ENCODE measurements at regions of chr6 and their contacts with region 1.

Region 1: DNA sequence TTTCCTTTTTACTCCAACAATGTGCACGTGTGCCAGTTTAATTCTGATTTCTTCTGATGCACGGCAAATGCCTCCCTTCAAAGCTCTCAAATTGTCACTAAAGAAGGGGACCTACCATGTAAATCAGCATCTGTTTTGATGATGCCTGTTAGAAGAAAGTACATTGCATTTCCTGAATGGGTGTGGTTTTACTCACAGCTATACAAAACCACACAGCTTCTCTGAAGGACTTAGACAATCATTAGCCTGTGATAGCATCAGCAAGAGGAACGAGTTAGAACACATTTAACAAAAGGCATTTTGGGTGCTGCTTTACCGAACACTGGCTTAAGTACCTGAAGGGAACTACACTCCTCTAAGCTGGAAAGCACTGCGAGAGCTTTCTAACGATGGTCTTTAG is 109.4 kb downstream of the ATXN1 start:
- DNase-seq: no peak
- H3K4me3 ChIP-seq: no peak overlapping the region
- H3K4me3 Mint-ChIP-seq: no peak overlapping the region
- H3K27ac ChIP-seq: peak overlapping the region in 1 of 2 donors; percentile 26
- H3K27ac Mint-ChIP-seq: no peak overlapping the region
- H3K4me1 ChIP-seq: peaks cover 7 to 17% of the 10 kb centered on the region in 2 donors
- H3K4me1 Mint-ChIP-seq: peaks cover 20% of the 10 kb centered on the region
- H3K27me3 ChIP-seq: no peaks in the 10 kb centered on the region
- H3K27me3 Mint-ChIP-seq: no peaks in the 10 kb centered on the region
- CTCF ChIP-seq: no peak

Region 2: DNA sequence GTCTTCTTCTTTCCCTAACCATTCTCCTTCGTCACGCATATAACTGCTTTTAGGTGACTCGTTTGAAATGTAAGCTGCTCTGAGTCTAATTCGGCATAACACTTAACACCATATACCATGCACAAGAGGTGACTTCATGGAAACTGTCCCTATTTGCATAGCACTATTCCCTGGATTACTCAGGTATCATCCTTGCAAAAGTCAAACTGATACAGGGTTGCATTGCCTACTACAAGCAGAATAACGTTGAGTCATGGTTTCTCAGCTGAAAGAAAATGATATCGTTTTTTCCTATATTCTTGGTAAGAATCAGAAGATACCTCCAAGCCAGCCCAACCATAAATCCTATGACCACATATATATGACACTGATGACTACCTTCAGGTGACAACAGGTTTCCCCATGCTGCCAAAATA is 118.1 kb before region 1 on chr6:
- intact Hi-C with region 1: no loop called
- DNase-seq: no peak
- H3K4me3 ChIP-seq: no peak overlapping the region
- H3K4me3 Mint-ChIP-seq: no peak overlapping the region
- H3K27ac ChIP-seq: no peak overlapping the region
- H3K27ac Mint-ChIP-seq: no peak overlapping the region
- H3K4me1 ChIP-seq: no peaks in the 10 kb centered on the region
- H3K4me1 Mint-ChIP-seq: no peaks in the 10 kb centered on the region
- H3K27me3 ChIP-seq: no peaks in the 10 kb centered on the region
- H3K27me3 Mint-ChIP-seq: no peaks in the 10 kb centered on the region
- CTCF ChIP-seq: no peak

Region 3: GRCh38 chr6:16602035-16602434 is 49.8 kb before region 1 on chr6:
- intact Hi-C with region 1: loop called in 1 of 2 experiments (anchors 10 kb)
- DNase-seq: no peak
- H3K4me3 ChIP-seq: no peak overlapping the region
- H3K4me3 Mint-ChIP-seq: no peak overlapping the region
- H3K27ac ChIP-seq: no peak overlapping the region
- H3K27ac Mint-ChIP-seq: no peak overlapping the region
- H3K4me1 ChIP-seq: no peaks in the 10 kb centered on the region
- H3K4me1 Mint-ChIP-seq: peaks cover 6% of the 10 kb centered on the region
- H3K27me3 ChIP-seq: no peaks in the 10 kb centered on the region
- H3K27me3 Mint-ChIP-seq: no peaks in the 10 kb centered on the region
- CTCF ChIP-seq: no peak